ENCODE measurements at regions of chrX and their contacts with region 1.

Region 1: DNA sequence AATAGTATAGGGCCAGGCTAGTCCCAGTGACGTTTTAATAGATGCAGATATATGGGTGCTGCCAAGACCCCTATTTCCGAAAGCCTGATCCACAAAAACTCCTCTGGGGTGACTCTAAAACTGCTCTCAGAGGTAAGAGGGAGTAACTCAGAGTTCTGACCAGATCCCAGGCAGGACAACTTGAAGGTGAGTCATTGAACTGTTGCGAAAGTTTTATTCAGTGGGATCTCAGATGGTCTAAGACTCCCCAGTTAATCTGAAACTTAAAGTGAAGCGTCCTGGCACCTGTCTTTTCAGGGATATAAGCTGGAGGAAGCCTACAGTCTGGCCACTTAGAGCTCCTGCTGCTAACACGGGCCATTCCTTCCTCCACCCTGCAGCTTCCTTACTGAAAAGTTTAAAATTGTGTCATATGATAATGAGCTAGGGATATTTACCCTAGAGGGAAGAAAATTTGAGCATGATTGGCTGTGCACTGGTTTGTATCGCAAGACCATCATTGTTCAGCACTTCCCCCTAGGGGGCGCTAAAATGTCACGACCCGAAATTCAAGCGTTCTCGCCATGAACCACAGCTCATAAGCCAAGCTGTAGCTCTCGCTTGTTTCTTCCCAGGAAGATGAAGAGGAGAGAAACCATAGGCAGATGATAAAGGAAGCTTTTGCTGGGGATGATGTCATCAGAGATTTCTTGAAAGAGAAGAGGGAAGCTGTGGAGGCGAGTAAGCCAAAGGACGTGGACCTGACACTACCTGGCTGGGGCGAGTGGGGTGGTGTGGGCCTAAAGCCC is 19.5 kb downstream of the UTP14A start:
- DNase-seq: peak; percentile 73
- H3K4me3 Mint-ChIP-seq: no peak overlapping the region
- H3K27ac Mint-ChIP-seq: no peak overlapping the region
- H3K4me1 Mint-ChIP-seq: no peaks in the 10 kb centered on the region
- H3K27me3 Mint-ChIP-seq: no peaks in the 10 kb centered on the region
- CTCF ChIP-seq: peak; percentile 62

Region 2: DNA sequence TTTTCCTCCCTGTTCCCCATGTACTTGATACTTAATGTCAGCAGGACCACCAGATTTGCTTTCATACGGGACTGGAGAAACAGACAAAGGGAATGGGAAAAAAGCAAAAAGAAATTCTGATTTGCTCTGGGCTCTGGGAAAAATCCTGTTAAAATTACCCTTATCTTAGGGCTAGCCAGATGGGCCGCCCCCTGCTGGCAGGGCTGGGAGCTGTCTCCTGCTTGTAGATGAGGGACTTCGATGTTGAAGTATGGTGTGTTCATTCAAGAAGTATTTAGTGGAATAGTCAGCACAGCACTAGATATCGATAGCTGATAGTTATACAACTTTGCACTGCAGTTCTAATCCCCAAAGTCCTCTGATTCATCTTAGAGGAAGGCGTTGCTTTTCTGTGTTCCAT is 102.7 kb after region 1 on chrX:
- CTCF ChIA-PET with region 1: interaction called, 16 read pairs
- intact Hi-C with region 1: loop called (anchors 1 kb)
- DNase-seq: peak; percentile 68
- H3K4me3 Mint-ChIP-seq: no peak overlapping the region
- H3K27ac Mint-ChIP-seq: no peak overlapping the region
- H3K4me1 Mint-ChIP-seq: no peaks in the 10 kb centered on the region
- H3K27me3 Mint-ChIP-seq: no peaks in the 10 kb centered on the region
- CTCF ChIP-seq: peak; percentile 73

Region 3: DNA sequence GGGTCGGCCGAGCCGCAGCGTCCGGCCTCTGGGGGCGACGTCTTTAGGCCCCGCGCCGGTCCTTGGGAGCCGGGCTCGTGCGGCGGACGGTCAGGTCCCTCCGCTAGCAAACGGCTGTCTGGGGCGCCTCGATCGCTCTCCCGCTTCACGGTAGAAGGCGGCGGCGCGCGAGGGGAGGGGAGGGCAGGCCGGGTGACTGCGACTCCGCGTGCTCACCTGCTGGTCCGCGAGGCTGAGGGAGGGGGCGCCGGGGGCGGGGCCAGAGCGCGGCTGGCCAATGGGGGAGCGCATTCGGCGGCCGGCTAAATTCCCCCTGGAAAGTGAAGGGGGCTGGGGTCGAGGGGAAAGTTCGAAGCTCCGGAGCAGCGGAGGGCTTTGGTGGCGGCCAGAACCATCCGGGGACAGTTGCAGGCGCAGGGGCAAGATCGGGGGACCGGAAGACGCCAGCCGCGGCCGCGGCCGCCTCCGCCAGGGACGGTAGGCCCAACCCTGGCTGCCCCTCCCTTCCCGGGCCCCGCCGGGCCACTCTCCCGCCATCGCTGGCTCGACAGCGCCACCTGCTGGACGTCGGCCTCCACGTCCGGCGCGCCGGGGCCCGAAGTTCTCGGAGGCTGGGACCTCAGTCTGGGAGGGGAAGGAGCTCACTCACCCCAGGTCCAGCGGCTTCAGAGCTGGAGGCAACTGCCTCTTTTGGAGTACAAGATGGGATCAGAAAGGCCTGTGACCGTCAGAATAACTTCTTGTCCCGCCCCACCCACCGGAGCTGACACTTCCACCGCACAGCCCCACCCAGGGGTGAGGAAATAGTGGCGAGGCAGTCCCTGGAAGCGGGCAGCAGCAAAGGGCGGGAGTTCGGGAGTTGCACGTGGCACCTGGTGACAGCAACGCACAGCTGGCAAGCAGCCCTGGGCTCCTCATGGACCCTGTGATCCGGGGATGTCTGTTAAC is 134.9 kb after region 1 on chrX:
- CTCF ChIA-PET with region 1: interaction called, 18 read pairs
- intact Hi-C with region 1: loop called (anchors 2 kb)
- DNase-seq: peak; percentile 91
- H3K4me3 Mint-ChIP-seq: peak overlapping the region; percentile 75
- H3K27ac Mint-ChIP-seq: peak overlapping the region; percentile 39
- H3K4me1 Mint-ChIP-seq: no peaks in the 10 kb centered on the region
- H3K27me3 Mint-ChIP-seq: no peaks in the 10 kb centered on the region
- CTCF ChIP-seq: peak; percentile 87